A673 (cell line): ENCODE measurements at regions of chr10 and their contacts with region 1.

Region 1: DNA sequence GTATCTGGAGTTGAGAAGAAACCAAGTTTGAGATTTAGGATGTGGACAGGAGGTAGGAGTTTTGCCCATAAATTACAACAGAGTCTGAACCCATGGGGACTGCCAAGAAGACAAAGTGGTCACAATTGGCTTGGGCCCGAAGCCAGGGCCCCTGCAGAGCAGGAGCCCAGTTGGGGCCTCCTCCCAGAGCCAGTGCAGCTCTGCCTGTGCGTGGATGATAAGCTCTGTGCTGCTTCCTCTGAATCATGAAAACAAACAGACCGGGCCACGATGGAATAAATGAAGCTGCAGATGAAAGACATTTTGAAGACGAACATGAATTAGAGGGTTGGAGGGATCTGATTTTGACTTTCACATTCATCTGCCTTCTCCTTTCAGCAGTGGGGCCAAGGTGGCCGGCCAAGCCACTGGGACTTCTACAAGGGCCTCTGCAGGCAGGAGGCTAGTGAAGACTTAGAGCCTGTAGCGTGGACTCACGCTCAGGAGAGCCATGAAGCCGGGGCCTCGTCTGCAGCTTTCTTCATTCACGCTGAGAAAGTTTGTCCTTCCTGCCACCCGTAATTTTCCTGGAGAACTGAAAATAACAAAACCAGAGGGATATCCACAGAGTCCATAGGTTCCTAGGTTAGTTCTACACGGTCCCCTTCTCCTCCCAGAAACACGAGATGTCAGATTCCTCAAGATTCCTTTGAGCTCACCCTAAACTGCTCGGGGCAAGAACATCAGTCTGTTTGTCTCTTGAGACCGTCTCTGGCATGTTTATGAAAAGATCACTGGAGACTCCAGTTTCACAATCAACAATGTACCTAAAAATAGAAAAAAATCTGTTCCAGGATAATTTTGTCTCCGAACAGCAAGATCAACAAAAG is 156.7 kb upstream of the LYZL1 start:
- DNase-seq: peak; percentile 90
- H3K4me3 ChIP-seq: peak overlapping the region; percentile 4
- H3K27ac ChIP-seq: peak overlapping the region; percentile 38
- H3K4me1 ChIP-seq: peaks cover 35% of the 10 kb centered on the region
- H3K27me3 ChIP-seq: no peaks in the 10 kb centered on the region
- CTCF ChIP-seq: no peak

Region 2: DNA sequence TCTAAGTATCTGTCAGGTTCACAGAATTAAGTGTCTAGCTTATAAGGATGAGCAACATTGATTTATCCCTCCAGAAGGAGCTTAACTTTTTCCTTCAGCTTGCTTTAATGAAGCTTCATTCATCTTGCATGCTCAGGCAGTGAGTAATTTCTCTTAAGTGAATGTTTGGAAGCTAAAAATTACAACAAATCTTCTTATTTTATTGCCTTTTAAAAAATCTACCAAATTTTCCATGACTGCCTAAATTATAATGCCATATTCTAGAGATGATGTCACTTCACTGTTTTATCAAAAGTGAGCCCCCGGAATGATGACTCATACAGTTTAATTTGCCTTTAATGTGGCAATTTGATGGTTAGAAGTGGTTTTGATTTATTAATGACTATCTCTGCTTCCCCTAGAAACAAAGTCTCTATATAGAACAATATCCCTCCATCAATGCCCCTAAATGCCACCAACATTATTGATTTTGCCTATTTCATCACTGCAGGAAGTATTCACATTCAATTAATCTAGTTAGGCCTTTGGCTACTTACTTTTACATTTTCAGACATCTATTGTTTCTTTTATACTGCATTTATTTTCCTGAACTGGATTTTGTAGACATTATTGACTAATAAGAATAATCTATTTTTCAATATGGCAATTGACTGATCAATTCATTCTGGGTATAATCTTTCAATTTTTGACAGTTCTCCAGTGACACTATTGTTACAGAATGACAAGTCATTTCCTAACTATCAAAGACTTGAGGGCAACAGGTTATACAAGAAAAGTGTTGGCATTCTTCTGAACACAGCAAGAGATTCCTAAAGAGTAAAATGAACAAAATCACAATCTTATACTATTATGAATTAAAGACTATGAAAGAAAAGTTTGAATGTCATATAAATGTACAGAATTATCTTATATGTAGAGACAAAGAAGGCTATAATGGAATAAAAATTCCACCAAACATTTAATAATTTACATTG is 994.0 kb before region 1 on chr10:
- CTCF ChIA-PET with region 1: no interaction called
- POLR2A ChIA-PET with region 1: no interaction called
- intact Hi-C with region 1: no loop called
- DNase-seq: peak; percentile 86
- H3K4me3 ChIP-seq: no peak overlapping the region
- H3K27ac ChIP-seq: no peak overlapping the region
- H3K4me1 ChIP-seq: no peaks in the 10 kb centered on the region
- H3K27me3 ChIP-seq: no peaks in the 10 kb centered on the region
- CTCF ChIP-seq: no peak

Region 3: DNA sequence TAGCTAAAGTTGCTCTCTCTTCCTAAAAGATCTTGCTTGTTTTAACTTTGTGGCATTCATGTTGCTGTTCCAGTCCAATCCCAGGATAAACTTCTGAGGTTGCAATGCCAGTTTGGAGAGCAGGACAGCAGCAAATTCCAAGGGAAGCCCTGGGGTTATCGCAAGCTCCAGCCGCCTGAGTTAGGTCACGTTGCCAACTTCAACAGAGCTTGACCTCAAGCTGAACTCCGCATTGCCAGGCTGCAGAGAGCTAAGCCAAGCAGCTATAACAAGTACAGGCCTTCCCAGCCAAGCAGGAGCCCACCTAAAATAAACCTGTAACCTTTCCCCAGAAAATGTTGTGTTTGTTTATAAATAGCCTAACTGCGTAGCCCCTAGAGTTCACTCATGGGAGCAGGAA is 17.8 kb after region 1 on chr10:
- CTCF ChIA-PET with region 1: no interaction called
- POLR2A ChIA-PET with region 1: no interaction called
- intact Hi-C with region 1: no loop called
- DNase-seq: no peak
- H3K4me3 ChIP-seq: no peak overlapping the region
- H3K27ac ChIP-seq: no peak overlapping the region
- H3K4me1 ChIP-seq: no peaks in the 10 kb centered on the region
- H3K27me3 ChIP-seq: no peaks in the 10 kb centered on the region
- CTCF ChIP-seq: no peak

Region 4: GRCh38 chr10:29204070-29204800 is 72.0 kb after region 1 on chr10:
- CTCF ChIA-PET with region 1: no interaction called
- POLR2A ChIA-PET with region 1: no interaction called
- intact Hi-C with region 1: loop called (anchors 5 kb)
- DNase-seq: peak; percentile 54
- H3K4me3 ChIP-seq: no peak overlapping the region
- H3K27ac ChIP-seq: peak overlapping the region; percentile 88
- H3K4me1 ChIP-seq: peaks cover 57% of the 10 kb centered on the region
- H3K27me3 ChIP-seq: no peaks in the 10 kb centered on the region
- CTCF ChIP-seq: no peak